ENCODE measurements at regions of chr20 and their contacts with region 1.

Region 1: GRCh38 chr20:10864076-10864918 is 190.5 kb upstream of the JAG1 start:
- DNase-seq: peak; percentile 65 to 81
- H3K4me3 ChIP-seq: peak overlapping the region; percentile 10; the same call in 1 of the 2 replicates
- H3K27ac ChIP-seq: peak overlapping the region; percentile 75
- H3K4me1 ChIP-seq: peaks cover 42% of the 10 kb centered on the region
- H3K27me3 ChIP-seq: no peaks in the 10 kb centered on the region
- CTCF ChIP-seq: no peak

Region 2: DNA sequence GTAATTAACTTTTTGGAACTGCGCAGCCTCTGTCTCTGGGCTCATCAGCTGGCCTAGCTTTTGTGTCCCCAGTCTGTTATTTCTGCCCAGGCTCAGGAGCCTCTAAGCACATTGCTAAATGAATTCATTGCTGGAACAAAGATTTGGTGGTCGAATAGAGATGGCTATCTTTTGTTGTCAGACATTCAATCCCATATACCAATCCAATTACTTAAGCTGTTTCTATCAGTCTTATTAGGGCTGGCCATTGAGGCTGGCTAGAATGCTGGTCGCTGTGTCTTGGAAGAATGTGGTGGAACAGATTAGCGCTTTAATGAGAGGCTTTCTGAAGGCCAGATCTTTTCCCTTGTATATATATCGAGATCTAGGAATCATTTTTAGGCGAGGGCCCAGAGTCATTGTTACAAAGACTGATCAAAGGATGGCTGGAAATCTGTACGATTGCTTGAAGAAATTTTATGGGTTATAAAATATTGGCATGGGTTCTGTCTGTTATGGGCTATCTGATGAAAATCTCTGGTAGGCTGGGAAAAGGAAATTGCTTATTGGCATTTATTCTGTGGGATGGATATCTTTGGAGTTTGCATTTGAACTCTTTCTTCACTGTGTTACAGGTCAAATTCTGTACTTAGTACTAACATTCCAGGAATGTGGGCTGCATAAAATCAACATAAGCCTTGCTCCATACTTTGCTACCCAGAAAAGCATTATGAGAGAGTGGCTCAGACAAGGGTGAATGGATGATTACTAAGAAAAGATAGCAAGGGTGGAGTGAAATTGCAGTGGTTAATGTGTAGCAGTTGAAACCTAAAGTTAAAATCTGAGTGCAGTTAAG is 155.7 kb before region 1 on chr20:
- CTCF ChIA-PET with region 1: no interaction called
- POLR2A ChIA-PET with region 1: no interaction called
- intact Hi-C with region 1: loop called (anchors 5 kb)
- DNase-seq: peak in 1 of 2 experiments; percentile 79
- H3K4me3 ChIP-seq: 0 out of 2 replicates have a peak overlapping the region, but pooled peaks have one; percentile 0
- H3K27ac ChIP-seq: peak overlapping the region; percentile 57
- H3K4me1 ChIP-seq: peaks cover 47% of the 10 kb centered on the region
- H3K27me3 ChIP-seq: no peaks in the 10 kb centered on the region
- CTCF ChIP-seq: no peak

Region 3: GRCh38 chr20:10922941-10923340 is 58.6 kb after region 1 on chr20:
- CTCF ChIA-PET with region 1: no interaction called
- POLR2A ChIA-PET with region 1: no interaction called
- intact Hi-C with region 1: loop called (anchors 5 kb)
- DNase-seq: peak; percentile 59 to 82
- H3K4me3 ChIP-seq: no peak overlapping the region
- H3K27ac ChIP-seq: peak overlapping the region; percentile 50
- H3K4me1 ChIP-seq: peaks cover 48% of the 10 kb centered on the region
- H3K27me3 ChIP-seq: no peaks in the 10 kb centered on the region
- CTCF ChIP-seq: no peak

Region 4: DNA sequence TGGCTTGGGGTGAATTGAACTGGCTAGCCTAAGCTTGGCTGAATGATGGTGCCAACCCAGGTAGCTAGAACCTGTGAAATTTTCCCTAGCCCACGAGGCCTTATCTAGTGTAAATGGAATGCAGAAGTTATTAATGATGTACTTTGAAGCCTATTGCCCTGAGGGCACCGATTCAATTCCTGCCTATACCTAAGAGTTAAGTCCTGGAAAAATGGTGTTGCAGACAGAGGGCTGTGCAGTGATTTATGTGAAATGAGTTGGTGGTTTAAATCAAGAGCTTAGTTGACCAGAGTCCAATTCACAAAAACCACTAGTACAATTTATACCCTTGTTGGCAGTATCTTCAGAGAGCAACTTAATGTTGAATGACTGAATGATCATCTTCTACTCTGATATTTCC is 183.3 kb after region 1 on chr20:
- CTCF ChIA-PET with region 1: no interaction called
- POLR2A ChIA-PET with region 1: no interaction called
- intact Hi-C with region 1: no loop called
- DNase-seq: peak; percentile 15 to 65
- H3K4me3 ChIP-seq: no peak overlapping the region
- H3K27ac ChIP-seq: no peak overlapping the region
- H3K4me1 ChIP-seq: peaks cover 10% of the 10 kb centered on the region; the same call in 1 of the 2 replicates
- H3K27me3 ChIP-seq: no peaks in the 10 kb centered on the region
- CTCF ChIP-seq: no peak

Region 5: DNA sequence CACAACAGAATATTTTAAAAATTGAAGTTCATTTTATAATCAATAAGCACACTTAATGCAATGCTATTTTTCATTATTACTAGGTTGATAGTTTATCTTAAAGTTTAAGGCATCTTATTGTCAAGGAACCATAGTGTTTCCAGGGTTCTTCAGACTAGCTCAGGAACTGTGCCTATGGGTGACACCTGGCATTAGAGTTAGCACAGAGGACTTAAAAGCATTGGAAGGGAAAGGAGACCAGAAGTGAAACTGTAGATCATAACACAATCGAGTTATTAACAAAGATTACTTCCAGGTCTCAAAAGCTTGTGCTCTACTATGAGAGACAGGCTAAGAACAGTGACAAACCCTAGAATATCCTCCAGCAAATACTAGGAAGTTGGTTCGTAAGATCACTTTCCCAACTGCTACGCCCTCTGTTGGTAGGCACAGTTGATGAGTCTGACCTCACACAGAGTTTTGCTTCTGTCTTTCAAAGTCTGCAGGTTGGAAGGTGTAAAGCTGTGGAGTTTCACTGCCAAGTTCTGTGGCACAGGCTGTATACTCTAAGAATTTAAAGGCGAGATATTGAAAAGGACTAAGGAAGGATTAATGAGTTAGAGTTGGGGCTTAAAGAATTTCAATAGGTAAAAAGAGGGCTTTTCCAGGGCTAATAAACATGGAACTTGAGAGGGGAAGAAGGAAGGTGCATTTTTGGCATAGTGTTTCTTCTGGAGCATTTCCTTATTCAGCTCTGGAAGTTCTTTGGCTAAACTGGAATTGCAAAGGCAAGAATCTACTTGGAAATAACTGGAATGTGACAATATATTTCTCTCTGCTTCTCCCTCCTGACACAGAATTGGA is 340.9 kb after region 1 on chr20:
- CTCF ChIA-PET with region 1: no interaction called
- POLR2A ChIA-PET with region 1: no interaction called
- intact Hi-C with region 1: loop called (anchors 5 kb)
- DNase-seq: peak in 1 of 2 experiments; percentile 54
- H3K4me3 ChIP-seq: no peak overlapping the region
- H3K27ac ChIP-seq: no peak overlapping the region
- H3K4me1 ChIP-seq: peaks cover 7% of the 10 kb centered on the region; the same call in 1 of the 2 replicates
- H3K27me3 ChIP-seq: no peaks in the 10 kb centered on the region
- CTCF ChIP-seq: peak; percentile 68

Region 6: GRCh38 chr20:11274141-11274594 is 409.9 kb after region 1 on chr20:
- CTCF ChIA-PET with region 1: no interaction called
- POLR2A ChIA-PET with region 1: no interaction called
- intact Hi-C with region 1: loop called (anchors 5 kb)
- DNase-seq: peak; percentile 30 to 61
- H3K4me3 ChIP-seq: no peak overlapping the region
- H3K27ac ChIP-seq: no peak overlapping the region
- H3K4me1 ChIP-seq: peaks cover 3% of the 10 kb centered on the region; the same call in 1 of the 2 replicates
- H3K27me3 ChIP-seq: no peaks in the 10 kb centered on the region
- CTCF ChIP-seq: peak; percentile 76

Region 7: DNA sequence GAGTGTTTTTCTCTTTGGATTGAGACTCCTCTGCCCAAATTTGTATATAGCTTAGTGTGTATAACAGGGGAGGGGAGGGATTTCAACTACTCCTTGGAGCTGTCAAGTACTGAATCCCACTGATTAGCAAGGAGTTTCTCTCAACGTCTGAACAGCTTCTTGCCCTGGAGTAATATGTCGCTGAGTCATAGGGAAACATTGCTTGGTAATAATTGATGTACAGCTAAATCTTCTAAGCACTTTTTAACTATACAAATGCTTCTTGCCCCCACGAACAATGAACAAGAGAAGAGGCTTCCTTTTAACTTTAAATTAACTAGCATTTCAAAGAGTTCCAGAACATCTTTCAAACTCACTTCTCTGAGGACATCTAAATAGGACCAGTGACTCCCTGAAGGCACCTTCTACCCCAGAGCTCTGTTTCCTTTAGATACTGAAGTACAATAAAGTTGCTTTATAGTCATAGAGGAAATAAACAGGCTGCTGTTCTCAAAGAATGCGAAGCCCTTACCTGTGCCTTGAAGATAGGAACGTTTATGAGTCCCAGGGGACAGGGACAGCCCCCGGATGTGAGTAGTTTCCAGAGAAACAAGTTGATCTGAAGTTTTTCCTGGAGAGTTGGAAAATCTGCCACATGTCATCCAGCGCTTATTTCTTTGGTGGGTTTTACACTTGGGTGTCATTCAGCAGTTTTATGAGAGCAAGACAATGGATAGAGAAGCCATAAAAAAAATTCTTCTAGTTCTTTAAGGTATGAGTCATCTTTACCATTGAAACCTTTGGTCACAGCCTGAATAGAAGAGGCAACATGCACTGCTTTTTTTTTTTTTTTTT is 590.9 kb after region 1 on chr20:
- CTCF ChIA-PET with region 1: no interaction called
- POLR2A ChIA-PET with region 1: no interaction called
- intact Hi-C with region 1: no loop called
- DNase-seq: peak; percentile 49 to 90
- H3K4me3 ChIP-seq: peak overlapping the region; percentile 13; the same call in 1 of the 2 replicates
- H3K27ac ChIP-seq: peak overlapping the region; percentile 89
- H3K4me1 ChIP-seq: peaks cover 42% of the 10 kb centered on the region
- H3K27me3 ChIP-seq: no peaks in the 10 kb centered on the region
- CTCF ChIP-seq: no peak